Gastrocnemius medialis (tissue), 4 donors: ENCODE measurements at regions of chr9 and their contacts with region 1.

Region 1: DNA sequence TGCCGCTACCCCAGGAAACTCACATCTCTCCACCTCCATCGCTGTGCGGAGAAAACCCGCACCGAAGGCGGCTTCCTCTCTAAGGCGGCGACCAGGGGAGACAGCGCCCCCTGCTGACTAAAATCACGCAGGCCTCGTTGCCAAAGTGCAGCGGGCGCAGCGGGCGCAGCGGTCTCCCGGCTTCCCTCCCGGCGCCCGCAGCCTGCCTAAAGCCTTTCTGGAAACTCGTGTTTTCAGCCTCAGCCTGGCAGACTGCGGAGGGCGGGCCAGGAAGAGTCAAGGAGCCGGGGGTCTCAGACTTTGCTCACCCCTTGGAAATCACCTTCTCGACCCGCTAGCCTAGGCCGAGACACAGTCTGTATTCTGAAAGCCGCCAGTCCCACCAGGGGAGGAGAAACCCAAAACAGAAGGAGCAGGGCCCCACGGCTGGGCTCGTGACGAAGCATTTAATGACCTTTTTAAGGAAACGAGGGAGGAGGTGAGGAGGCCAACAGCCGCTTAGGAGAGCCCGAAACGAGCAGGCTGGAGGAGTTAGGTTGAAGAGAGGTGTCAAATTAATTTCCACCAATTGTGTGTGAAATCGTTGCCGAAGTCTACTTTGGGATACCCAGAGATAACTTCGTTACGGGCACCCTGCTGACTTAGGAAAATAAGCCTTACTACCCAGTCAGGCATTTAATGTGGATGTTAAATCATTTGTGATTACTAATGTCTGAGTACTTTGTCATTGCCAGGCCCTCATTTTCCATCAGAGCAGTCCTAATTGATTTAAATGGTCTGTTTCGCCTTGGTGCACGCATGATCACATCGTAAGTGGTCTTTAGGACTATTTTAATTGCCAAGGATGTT is 7.3 kb upstream of the FOXB2 start:
- DNase-seq: peak in 1 of 2 donors; percentile 25
- ATAC-seq: peak; percentile 66 to 73
- H3K4me3 ChIP-seq: peak overlapping the region in 3 of 4 donors; percentile 7 to 39 (median 31)
- H3K27ac ChIP-seq: no peak overlapping the region
- H3K4me1 ChIP-seq: peaks cover 22 to 24% of the 10 kb centered on the region in 2 donors
- H3K27me3 ChIP-seq: peaks cover 80 to 95% (median 84%) of the 10 kb centered on the region in 3 donors
- CTCF ChIP-seq: peak; percentile 27 to 79 (median 71)
- POLR2A ChIP-seq: no peak

Region 2: GRCh38 chr9:77149879-77150278 is 137.7 kb after region 1 on chr9:
- in situ Hi-C with region 1: no loop called
- intact Hi-C with region 1: loop called (anchors 5 kb)
- DNase-seq: no peak
- ATAC-seq: no peak
- H3K4me3 ChIP-seq: no peak overlapping the region
- H3K27ac ChIP-seq: no peak overlapping the region
- H3K4me1 ChIP-seq: peaks cover 0 to 7% of the 10 kb centered on the region in 2 donors
- H3K27me3 ChIP-seq: no peaks in the 10 kb centered on the region
- CTCF ChIP-seq: no peak
- POLR2A ChIP-seq: no peak